Mammary epithelial cell (primary cell): ENCODE measurements at regions of chr6 and their contacts with region 1.

Region 1: DNA sequence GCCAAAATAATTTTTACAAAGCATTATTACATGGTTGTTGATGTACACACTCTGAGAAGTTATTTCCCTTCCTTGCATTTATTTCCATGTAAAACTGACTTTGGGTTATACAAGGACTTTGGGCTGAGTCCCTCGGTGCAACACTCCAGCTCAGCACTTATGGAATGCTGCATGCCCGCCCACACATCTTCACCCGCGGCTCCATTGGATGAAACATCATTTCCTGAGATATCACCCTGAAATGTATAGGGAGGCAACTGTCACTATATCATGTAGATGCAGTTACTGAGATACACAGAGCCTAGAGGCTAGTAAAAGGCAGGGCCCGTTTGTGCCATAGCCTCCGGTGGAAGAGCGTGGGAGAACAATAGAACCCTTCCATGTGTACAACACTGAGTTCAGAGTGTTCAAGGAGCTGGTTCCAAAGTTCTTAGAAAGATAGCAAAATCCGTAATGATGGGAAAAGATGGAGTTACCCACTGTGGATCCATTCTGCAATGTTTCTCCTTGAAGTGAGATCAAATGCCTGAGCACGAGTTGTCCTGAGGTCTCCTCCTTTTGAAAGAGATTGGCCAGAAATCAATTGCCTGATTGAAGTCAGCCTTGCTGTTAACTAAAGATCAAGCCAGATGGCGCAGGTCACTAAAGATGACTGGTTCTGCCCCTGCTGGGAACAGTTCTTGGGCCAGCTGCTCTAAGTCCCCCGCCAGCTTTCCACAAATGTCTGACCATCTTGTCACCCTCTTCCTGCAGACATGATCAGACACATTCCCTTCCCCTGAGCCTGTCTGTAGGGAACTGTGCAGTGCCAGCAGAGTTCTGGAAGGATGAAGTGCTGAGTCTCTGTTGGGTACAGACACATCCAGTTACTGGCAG is 100.9 kb upstream of the IYD start:
- DNase-seq: peak; percentile 91
- H3K4me3 ChIP-seq: no peak overlapping the region
- H3K27ac ChIP-seq: peak overlapping the region; percentile 99
- H3K4me1 ChIP-seq: peaks cover 65% of the 10 kb centered on the region
- H3K27me3 ChIP-seq: no peaks in the 10 kb centered on the region
- CTCF ChIP-seq: peak in 1 of 2 donors; percentile 35

Region 2: GRCh38 chr6:150297327-150298029 is 29.6 kb after region 1 on chr6:
- CTCF ChIA-PET with region 1: no interaction called
- dilution Hi-C with region 1: no loop called
- in situ Hi-C with region 1: no loop called
- intact Hi-C with region 1: loop called (anchors 1 kb)
- DNase-seq: peak; percentile 99
- H3K4me3 ChIP-seq: peak overlapping the region; percentile 3 to 12 (median 9)
- H3K27ac ChIP-seq: peak overlapping the region; percentile 99
- H3K4me1 ChIP-seq: peaks cover 52% of the 10 kb centered on the region
- H3K27me3 ChIP-seq: no peaks in the 10 kb centered on the region
- CTCF ChIP-seq: no peak